Activated T-helper 2 cell treated with anti-CD3 and anti-CD28 coated beads, Interferon-gamma antibody, Interleukin-2, Interleukin-4, amounts not matched to agents 10 μg/mL and 5 μg/mL and 100 μg/mL, durations not matched to agents 14 hours and 24 hours and 36 hours (primary cell): ENCODE measurements at regions of chr1 and their contacts with region 1.

Region 1: GRCh38 chr1:109548321-109549267 is at the start of gene GNAI3:
- DNase-seq: peak; percentile 96
- H3K4me3 Mint-ChIP-seq: peak within 1 kb of the TSS; percentile 99
- H3K27ac Mint-ChIP-seq: peak within 1 kb of the TSS; percentile 95
- H3K4me1 Mint-ChIP-seq: peaks cover 42% of the 10 kb centered on the region
- H3K27me3 Mint-ChIP-seq: no peaks in the 10 kb centered on the region
- total RNA-seq, gene GNAI3: 8.9 and 9.4 TPM in 2 replicates

Region 2: DNA sequence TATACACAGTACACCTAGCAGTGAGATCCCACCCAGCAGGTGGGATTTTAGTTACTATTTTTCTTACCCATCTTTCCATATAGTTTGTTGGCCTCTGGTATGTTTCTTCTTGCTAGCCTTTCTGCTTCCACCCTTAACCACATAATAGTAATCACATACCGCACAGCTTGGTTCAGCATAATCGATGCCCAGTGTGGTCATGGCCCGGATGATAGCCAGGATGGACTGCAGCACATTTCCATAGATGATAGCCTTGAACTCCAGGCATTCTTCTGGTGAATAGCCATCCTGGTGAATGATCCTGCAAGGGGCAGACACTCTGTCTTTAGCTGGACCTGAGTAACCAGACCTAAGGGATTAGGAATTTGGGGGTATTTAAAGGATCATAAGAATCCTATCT is 61.3 kb after region 1 on chr1:
- intact Hi-C with region 1: no loop called
- DNase-seq: no peak
- H3K4me3 Mint-ChIP-seq: no peak overlapping the region
- H3K27ac Mint-ChIP-seq: no peak overlapping the region
- H3K4me1 Mint-ChIP-seq: no peaks in the 10 kb centered on the region
- H3K27me3 Mint-ChIP-seq: peaks cover 15% of the 10 kb centered on the region

Region 3: DNA sequence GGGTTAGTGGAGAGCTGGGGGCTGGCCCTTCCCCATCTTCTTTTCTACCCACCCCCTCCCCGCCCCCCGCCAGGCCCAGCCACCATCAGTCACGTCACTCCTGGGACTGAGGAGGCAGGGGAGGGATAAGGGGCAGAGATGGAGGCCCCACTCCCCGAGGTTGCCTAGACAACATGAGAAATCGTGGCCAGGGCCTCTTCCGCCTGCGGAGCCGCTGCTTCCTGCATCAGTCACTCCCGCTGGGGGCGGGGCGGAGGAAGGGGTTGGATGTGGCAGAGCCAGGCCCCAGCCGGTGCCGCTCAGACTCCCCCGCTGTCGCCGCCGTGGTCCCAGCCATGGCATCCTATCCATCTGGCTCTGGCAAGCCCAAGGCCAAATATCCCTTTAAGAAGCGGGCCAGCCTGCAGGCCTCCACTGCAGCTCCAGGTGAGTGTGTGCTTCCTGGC is 72.3 kb after region 1 on chr1:
- intact Hi-C with region 1: loop called (anchors 1 kb)
- DNase-seq: peak; percentile 97
- H3K4me3 Mint-ChIP-seq: peak overlapping the region; percentile 93
- H3K27ac Mint-ChIP-seq: peak overlapping the region; percentile 96
- H3K4me1 Mint-ChIP-seq: peaks cover 63% of the 10 kb centered on the region
- H3K27me3 Mint-ChIP-seq: no peaks in the 10 kb centered on the region

Region 4: GRCh38 chr1:109643385-109644230 is 95.0 kb after region 1 on chr1:
- intact Hi-C with region 1: loop called (anchors 2 kb)
- DNase-seq: peak; percentile 81
- H3K4me3 Mint-ChIP-seq: no peak overlapping the region
- H3K27ac Mint-ChIP-seq: no peak overlapping the region
- H3K4me1 Mint-ChIP-seq: peaks cover 22% of the 10 kb centered on the region
- H3K27me3 Mint-ChIP-seq: peaks cover 4% of the 10 kb centered on the region

Region 5: GRCh38 chr1:109773146-109773899 is 224.7 kb after region 1 on chr1:
- intact Hi-C with region 1: loop called (anchors 1 kb)
- DNase-seq: peak; percentile 65
- H3K4me3 Mint-ChIP-seq: no peak overlapping the region
- H3K27ac Mint-ChIP-seq: no peak overlapping the region
- H3K4me1 Mint-ChIP-seq: peaks cover 23% of the 10 kb centered on the region
- H3K27me3 Mint-ChIP-seq: peaks cover 5% of the 10 kb centered on the region

Region 6: DNA sequence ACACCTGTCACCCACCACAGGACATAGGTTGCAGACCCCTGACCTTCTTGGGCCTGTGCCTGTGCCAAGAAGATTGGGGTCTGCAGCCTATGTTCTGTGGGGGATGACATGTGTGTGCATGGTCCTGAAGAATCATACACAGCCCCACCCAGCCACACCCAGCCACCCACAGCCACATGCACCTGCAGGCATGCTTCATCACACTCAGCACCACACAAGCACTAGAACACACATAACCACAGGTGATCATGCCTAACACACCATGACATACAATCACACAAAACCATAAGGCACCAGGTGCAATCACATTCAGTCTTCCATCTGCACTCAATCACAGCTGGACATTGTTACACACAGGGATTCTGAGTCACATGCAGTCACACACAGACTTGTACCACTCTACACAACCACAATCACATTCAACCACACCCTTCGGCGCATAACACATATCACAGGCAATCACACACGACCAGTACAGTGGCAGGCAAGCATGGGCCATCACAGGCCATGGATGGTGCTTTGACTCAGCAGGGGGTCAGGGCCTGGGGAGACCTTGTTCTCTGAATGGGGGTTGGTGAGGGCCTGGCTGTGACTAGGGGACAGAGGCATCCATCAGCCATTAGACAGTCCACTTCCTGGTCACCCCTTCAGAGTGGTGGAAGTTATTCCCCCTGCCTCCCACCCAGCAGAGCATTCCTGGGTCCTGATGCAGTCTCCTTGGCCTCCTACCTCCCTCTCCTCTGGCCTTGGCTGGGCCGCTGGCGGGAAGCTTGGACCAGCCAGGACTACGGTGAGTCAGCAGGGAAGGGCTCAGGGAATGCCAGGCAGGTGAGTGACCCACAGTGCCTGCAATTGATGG is 259.5 kb after region 1 on chr1:
- intact Hi-C with region 1: no loop called
- DNase-seq: no peak
- H3K4me3 Mint-ChIP-seq: no peak overlapping the region
- H3K27ac Mint-ChIP-seq: peak overlapping the region; percentile 8
- H3K4me1 Mint-ChIP-seq: peaks cover 41% of the 10 kb centered on the region
- H3K27me3 Mint-ChIP-seq: no peaks in the 10 kb centered on the region

Region 7: GRCh38 chr1:109984456-109985275 is 436.1 kb after region 1 on chr1 and contains the start of gene AHCYL1:
- intact Hi-C with region 1: loop called (anchors 1 kb)
- DNase-seq: peak; percentile 99
- H3K4me3 Mint-ChIP-seq: peak within 1 kb of the TSS; percentile 97
- H3K27ac Mint-ChIP-seq: peak within 1 kb of the TSS; percentile 97
- H3K4me1 Mint-ChIP-seq: peaks cover 42% of the 10 kb centered on the region
- H3K27me3 Mint-ChIP-seq: no peaks in the 10 kb centered on the region
- total RNA-seq, gene AHCYL1: 85.8 and 86.5 TPM in 2 replicates